A673 (cell line): ENCODE measurements at regions of chr5 and their contacts with region 1.

Region 1: DNA sequence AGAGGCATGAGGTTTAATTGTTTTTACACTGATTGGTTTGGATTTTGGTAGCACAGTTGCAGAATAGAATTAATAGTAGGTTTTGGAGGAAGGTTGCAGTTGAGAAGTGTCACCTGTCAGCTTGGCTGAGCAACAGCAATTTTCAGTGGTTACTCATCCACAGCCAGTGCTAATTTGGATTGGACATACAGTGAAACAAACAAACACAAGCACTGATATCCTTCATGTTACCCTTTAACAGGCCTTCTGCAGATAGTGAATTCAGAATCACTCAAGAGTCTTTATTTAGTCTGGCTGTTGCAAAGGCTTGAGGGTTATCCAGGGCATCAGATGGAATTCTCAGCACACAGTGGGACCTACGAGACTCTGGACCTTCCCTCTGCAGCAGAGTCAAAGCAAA is 31.8 kb upstream of the POU4F3 start:
- DNase-seq: no peak
- H3K4me3 ChIP-seq: no peak overlapping the region
- H3K27ac ChIP-seq: no peak overlapping the region
- H3K4me1 ChIP-seq: no peaks in the 10 kb centered on the region
- H3K27me3 ChIP-seq: no peaks in the 10 kb centered on the region
- CTCF ChIP-seq: no peak

Region 2: DNA sequence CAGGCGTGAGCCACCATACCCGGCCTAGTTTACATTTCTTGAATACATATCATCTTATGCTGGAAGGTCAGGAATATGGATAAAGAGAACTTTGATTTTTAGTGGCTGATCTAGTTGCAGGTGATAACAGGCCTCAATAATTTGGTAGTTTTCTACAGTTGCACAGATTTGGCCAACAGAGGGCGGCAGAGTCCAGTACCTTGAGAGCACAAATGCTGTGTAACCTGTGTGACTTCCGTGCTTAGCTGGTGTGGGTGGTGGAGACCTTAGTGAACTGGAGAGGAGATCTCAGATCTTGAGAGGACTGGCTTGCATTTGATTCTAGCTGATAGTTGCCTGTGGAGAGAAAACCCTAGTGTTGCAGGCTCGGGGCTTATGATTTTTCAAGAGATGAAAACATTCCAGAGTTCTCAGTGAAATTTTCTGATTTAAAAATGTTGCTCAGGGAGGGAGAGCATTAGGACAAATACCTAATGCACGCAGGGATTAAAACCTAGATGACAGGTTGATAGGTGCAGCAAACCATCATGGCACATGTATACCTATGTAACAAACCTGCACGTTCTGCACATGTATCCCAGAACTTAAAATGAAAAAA is 226.5 kb after region 1 on chr5:
- CTCF ChIA-PET with region 1: no interaction called
- POLR2A ChIA-PET with region 1: no interaction called
- intact Hi-C with region 1: loop called (anchors 10 kb)
- DNase-seq: peak; percentile 72
- H3K4me3 ChIP-seq: no peak overlapping the region
- H3K27ac ChIP-seq: no peak overlapping the region
- H3K4me1 ChIP-seq: no peaks in the 10 kb centered on the region
- H3K27me3 ChIP-seq: no peaks in the 10 kb centered on the region
- CTCF ChIP-seq: peak; percentile 93